ENCODE measurements at regions of chr1 and their contacts with region 1.

Region 1: DNA sequence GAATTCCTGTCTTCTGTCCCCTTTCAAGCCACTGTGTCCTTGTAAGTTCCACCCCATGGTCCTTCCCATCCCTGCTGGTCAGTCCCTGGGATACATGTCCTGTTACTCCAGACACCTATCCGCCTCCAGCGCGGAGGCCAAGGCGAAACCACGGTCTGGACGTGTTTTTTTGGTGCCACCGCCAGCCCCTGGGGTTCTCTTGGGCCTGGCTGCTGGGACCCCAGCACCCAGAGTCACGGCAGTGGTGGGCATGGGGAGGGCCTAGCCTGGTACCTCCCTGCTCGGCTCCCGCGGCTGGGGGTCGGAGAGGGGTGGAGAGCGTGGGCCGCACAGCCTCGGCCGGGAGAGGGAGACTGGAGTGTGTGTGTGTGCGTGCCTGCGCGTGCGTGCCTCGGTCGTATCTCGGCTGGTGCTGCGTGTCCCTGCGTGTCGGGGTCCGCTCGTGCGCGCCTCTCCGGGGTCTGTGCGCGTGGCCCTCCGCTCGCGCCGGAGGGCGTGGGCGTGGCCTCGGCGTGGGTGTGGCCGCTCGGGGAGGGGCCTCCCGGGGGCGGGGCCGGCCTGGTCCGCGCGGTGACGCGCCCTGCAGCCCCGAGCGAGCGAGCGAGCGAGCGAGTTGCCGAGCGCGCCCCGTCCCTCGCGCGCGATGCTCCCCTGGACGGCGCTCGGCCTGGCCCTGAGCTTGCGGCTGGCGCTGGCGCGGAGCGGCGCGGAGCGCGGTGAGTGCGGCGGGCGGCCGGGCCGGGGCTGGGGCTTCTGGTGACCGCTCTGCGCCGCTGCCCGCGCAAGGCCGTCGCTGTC is at the start of gene VWA1:
- DNase-seq: peak in 1 of 2 experiments; percentile 86
- H3K4me3 ChIP-seq: peak within 1 kb of the TSS; percentile 46 to 72 (median 70)
- H3K27ac ChIP-seq: peak within 1 kb of the TSS; percentile 17; the same call in 1 of the 2 replicates
- H3K4me1 ChIP-seq: peaks cover 0 to 54% (median 41%) of the 10 kb centered on the region in 4 experiments; a peak in 6 of 7 replicates
- H3K27me3 ChIP-seq: peaks cover 0 to 3% (median 0%) of the 10 kb centered on the region in 4 experiments; a peak in 2 of 7 replicates
- CTCF ChIP-seq: no peak
- EP300 ChIP-seq: no peak
- POLR2A ChIP-seq: no peak
- RAD21 ChIP-seq: no peak
- total RNA-seq, gene VWA1: 36.6 and 42.0 TPM in 2 replicates

Region 2: GRCh38 chr1:1200851-1201810 is 234.2 kb before region 1 on chr1:
- CTCF ChIA-PET with region 1: no interaction called
- POLR2A ChIA-PET with region 1: no interaction called
- DNase-seq: peak in 1 of 2 experiments; percentile 76
- H3K4me3 ChIP-seq: peak overlapping the region; percentile 23 to 67 (median 30); a peak in 7 of 8 replicates
- H3K27ac ChIP-seq: no peak overlapping the region
- H3K4me1 ChIP-seq: peaks cover 0 to 10% (median under 1%) of the 10 kb centered on the region in 4 experiments; a peak in 4 of 7 replicates
- H3K27me3 ChIP-seq: peaks cover 2 to 9% (median 8%) of the 10 kb centered on the region in 4 experiments; a peak in 6 of 7 replicates
- CTCF ChIP-seq: no peak
- EP300 ChIP-seq: no peak
- POLR2A ChIP-seq: no peak
- RAD21 ChIP-seq: no peak

Region 3: GRCh38 chr1:1324521-1325287 is 110.6 kb before region 1 on chr1 and contains the starts of genes CPTP and INTS11:
- CTCF ChIA-PET with region 1: no interaction called
- POLR2A ChIA-PET with region 1: no interaction called
- DNase-seq: peak in 1 of 2 experiments; percentile 94
- H3K4me3 ChIP-seq: peak within 1 kb of the TSS; percentile 60 to 100 (median 83)
- H3K27ac ChIP-seq: peak within 1 kb of the TSS; percentile 55; the same call in 1 of the 2 replicates
- H3K4me1 ChIP-seq: peaks cover 0 to 13% (median 3%) of the 10 kb centered on the region in 4 experiments; a peak in 5 of 7 replicates
- H3K27me3 ChIP-seq: no peaks in the 10 kb centered on the region; a peak in 1 of 7 replicates
- CTCF ChIP-seq: no peak
- EP300 ChIP-seq: no peak
- POLR2A ChIP-seq: peak in 1 of 2 experiments; percentile 74; a peak in 2 of 3 replicates
- RAD21 ChIP-seq: no peak
- total RNA-seq, gene CPTP: 10.6 and 13.3 TPM in 2 replicates
- total RNA-seq, gene INTS11: 113 and 116 TPM in 2 replicates

Region 4: GRCh38 chr1:1406817-1407635 is 28.3 kb before region 1 on chr1 and contains the start of gene MRPL20:
- CTCF ChIA-PET with region 1: interaction called, 20 read pairs
- POLR2A ChIA-PET with region 1: interaction called, 515 read pairs
- DNase-seq: peak; percentile 61 to 93
- H3K4me3 ChIP-seq: peak within 1 kb of the TSS; percentile 91 to 99 (median 93)
- H3K27ac ChIP-seq: peak within 1 kb of the TSS; percentile 94
- H3K4me1 ChIP-seq: peaks cover 8 to 18% (median 14%) of the 10 kb centered on the region in 4 experiments
- H3K27me3 ChIP-seq: no peaks in the 10 kb centered on the region
- CTCF ChIP-seq: 0 out of 4 replicates have a peak, but pooled peaks of 1 of the 3 experiments have one; percentile 0
- EP300 ChIP-seq: no peak
- POLR2A ChIP-seq: peak in 1 of 2 experiments; percentile 94; a peak in 2 of 3 replicates
- RAD21 ChIP-seq: no peak
- total RNA-seq, gene MRPL20: 126 and 130 TPM in 2 replicates

Region 5: GRCh38 chr1:1419642-1420384 is 15.5 kb before region 1 on chr1:
- CTCF ChIA-PET with region 1: interaction called, 14 read pairs
- POLR2A ChIA-PET with region 1: interaction called, 56 read pairs
- DNase-seq: no peak
- H3K4me3 ChIP-seq: peak overlapping the region; percentile 7 to 50 (median 26); a peak in 6 of 8 replicates
- H3K27ac ChIP-seq: no peak overlapping the region; the same call in 1 of the 2 replicates
- H3K4me1 ChIP-seq: peaks cover 0 to 29% (median 23%) of the 10 kb centered on the region in 4 experiments; a peak in 6 of 7 replicates
- H3K27me3 ChIP-seq: no peaks in the 10 kb centered on the region; a peak in 2 of 7 replicates
- CTCF ChIP-seq: no peak; a peak in 1 of 4 replicates
- EP300 ChIP-seq: no peak
- POLR2A ChIP-seq: no peak
- RAD21 ChIP-seq: no peak; a peak in 1 of 4 replicates

Region 6: DNA sequence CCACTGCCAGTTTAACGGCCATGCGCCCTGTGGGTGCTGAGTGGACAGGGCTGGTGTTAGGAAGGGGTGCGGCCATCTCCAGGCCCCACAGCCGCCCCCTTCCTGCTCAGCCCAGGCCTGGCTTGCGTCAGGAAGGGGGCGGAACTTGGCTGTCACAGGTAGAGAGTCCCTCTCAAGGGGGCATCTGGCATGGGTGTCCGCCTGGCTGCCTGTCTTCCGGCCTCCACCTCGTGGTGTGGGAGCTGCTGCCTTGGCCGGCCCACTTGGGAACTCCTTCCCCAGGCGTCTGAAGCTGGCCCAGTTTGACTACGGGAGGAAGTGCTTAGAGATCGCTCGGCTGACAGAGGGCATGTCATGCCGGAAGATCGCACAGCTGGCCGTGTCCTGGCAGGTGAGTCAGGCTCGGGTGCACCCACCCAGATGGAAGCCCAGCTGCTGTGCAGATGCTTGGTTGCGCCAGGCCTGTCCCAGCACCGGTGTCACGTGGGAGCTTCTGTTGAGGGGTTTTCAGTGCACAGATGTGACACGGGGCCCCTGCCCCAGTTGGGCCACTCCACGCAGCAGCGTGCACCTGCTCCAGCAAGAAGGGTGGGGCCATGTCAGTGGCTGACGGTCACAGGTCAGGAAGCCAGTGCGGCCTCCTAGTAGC is 27.1 kb after region 1 on chr1:
- CTCF ChIA-PET with region 1: interaction called, 6 read pairs
- POLR2A ChIA-PET with region 1: interaction called, 10 read pairs
- DNase-seq: no peak
- H3K4me3 ChIP-seq: no peak overlapping the region
- H3K27ac ChIP-seq: no peak overlapping the region
- H3K4me1 ChIP-seq: no peaks in the 10 kb centered on the region
- H3K27me3 ChIP-seq: no peaks in the 10 kb centered on the region
- CTCF ChIP-seq: no peak
- EP300 ChIP-seq: no peak
- POLR2A ChIP-seq: no peak
- RAD21 ChIP-seq: no peak

Measured in H1 (cell line).